ENCODE measurements at regions of chr7 and their contacts with region 1.

Region 1: DNA sequence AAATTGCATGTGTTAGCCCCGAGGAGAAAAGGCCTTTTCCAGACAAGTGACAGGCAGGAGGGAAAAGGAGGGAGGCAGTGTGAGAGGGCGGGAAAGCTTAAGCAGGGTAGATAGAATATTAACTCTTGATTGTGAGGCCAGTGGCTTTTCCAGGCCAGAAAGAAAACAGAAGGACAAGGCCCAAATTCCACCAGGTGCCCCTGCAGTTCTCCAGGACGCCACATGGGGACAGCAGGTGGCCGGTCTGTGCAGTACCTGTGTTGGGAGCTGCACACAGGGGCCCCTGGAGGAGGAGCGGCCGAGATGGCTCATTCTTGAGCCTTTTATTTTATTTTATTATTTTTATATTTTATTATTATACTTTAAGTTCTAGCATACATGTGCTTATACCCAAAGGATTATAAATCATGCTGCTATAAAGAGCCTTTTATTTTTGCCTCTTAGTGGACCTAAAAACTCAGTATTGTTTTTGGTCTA is 141.3 kb upstream of the KLF14 start:
- DNase-seq: peak in 8 of 9 donors; percentile 17 to 41 (median 32)
- ATAC-seq: peak; percentile 86
- H3K4me3 ChIP-seq: no peak overlapping the region
- H3K4me3 Mint-ChIP-seq: no peak overlapping the region
- H3K27ac ChIP-seq: no peak overlapping the region
- H3K27ac Mint-ChIP-seq: peak overlapping the region in 7 of 9 donors; percentile 3 to 78 (median 53)
- H3K4me1 ChIP-seq: peaks cover 4 to 6% of the 10 kb centered on the region in 2 donors
- H3K4me1 Mint-ChIP-seq: peaks cover 19 to 46% (median 40%) of the 10 kb centered on the region in 7 donors
- H3K27me3 ChIP-seq: no peaks in the 10 kb centered on the region
- H3K27me3 Mint-ChIP-seq: no peaks in the 10 kb centered on the region

Region 2: DNA sequence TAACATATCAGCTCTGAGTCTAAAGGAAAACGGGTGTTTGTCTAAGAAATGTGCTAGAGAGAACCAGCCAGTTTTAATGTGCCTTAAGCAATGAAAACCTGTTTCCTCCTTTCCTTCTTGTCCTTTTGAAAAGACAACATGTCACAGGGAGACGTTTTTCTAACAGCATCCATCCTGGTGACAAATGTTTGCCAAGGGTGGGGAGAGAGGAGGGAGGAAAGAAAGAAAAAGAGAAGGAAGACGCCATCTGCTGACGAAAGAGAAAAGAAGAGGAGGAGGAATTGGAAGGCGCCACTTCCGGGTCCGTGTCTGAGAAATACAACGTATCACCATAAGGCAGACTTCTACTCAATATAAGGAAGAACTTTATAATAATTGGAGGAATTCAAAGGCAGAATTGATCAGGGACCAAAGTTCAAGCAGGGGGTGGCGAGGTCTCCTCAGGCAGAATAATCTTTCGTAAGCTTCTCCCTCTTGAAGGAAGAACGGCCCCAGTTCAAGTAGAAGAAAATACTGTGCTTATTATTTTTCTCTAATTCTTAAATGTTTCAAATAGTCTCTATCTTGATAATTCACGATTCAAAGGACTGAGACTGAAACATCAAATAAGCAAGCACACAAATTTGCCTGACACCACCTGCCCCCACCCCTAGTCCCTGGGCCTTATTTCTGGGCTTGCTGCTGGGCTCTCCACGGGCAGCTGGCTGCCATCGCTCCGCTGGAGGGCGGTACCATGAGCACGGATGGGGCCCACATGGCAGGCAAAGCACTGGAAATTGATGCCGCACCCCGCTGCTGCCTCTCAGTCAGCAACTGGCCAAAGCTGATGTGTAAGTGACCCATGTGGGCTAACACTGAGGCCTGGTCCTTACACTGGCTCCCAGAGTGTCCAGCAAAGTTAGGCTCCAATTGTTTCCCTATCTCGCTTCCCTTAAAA is 132.4 kb after region 1 on chr7:
- CTCF ChIA-PET with region 1: no interaction called
- POLR2A ChIA-PET with region 1: no interaction called
- intact Hi-C with region 1: loop called in 1 of 2 experiments (anchors 5 kb)
- DNase-seq: peak in 7 of 9 donors; percentile 51 to 69 (median 63)
- ATAC-seq: peak; percentile 72
- H3K4me3 ChIP-seq: no peak overlapping the region
- H3K4me3 Mint-ChIP-seq: peak overlapping the region in 9 of 10 donors; percentile 52 to 87 (median 69)
- H3K27ac ChIP-seq: peak overlapping the region; percentile 67
- H3K27ac Mint-ChIP-seq: peak overlapping the region; percentile 83 to 97 (median 88)
- H3K4me1 ChIP-seq: peaks cover 60 to 64% of the 10 kb centered on the region in 2 donors
- H3K4me1 Mint-ChIP-seq: peaks cover 68 to 94% (median 87%) of the 10 kb centered on the region in 7 donors
- H3K27me3 ChIP-seq: no peaks in the 10 kb centered on the region
- H3K27me3 Mint-ChIP-seq: no peaks in the 10 kb centered on the region

Region 3: GRCh38 chr7:131040467-131040932 is 165.2 kb after region 1 on chr7:
- CTCF ChIA-PET with region 1: no interaction called
- POLR2A ChIA-PET with region 1: interaction called, 7 read pairs
- intact Hi-C with region 1: loop called in 1 of 2 experiments (anchors 1 kb)
- DNase-seq: peak in 7 of 9 donors; percentile 31 to 63 (median 56)
- ATAC-seq: peak; percentile 71
- H3K4me3 ChIP-seq: no peak overlapping the region
- H3K4me3 Mint-ChIP-seq: peak overlapping the region; percentile 16 to 84 (median 60)
- H3K27ac ChIP-seq: no peak overlapping the region
- H3K27ac Mint-ChIP-seq: peak overlapping the region; percentile 29 to 82 (median 54)
- H3K4me1 ChIP-seq: peaks cover 14 to 27% of the 10 kb centered on the region in 2 donors
- H3K4me1 Mint-ChIP-seq: peaks cover 44 to 78% (median 68%) of the 10 kb centered on the region in 7 donors
- H3K27me3 ChIP-seq: no peaks in the 10 kb centered on the region
- H3K27me3 Mint-ChIP-seq: no peaks in the 10 kb centered on the region

Region 4: DNA sequence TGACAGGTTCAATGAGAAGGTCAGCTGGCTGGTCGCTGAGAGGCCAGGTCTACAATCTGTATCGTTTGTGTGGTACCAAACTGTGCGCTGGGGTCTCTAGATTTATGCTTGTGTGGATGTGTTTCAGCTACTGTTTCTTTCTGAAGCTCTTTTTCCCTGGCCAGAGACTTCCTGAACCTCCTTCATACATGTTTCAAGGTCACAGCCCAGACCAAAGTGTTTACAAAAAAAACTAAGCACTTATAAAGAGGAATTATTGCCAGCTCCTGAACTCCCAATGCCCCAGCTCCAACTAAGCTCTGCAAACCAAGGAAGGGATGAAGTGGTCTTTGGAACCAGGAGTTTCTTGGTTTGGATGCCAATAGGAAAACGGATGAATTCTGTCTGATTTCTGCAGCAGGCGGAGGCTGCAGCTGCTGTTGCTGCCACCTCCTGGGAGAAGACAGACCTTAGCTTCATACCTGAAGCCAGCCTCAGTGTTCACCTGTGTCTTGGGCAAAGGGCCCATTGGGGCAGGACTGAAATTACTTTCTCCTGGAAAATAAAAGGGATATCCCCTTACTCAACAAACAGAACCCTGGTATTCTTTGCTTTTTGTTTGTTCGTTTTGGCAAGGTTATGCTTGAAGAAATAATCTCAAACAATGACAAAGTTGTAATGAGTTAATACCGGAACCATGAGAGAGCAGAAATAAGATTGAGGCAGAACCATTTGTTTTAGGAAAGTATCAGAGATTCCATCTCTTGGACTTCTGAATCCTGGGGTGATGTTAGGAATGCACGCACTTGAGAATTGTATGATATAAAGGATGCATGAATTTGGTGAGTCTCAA is 427.8 kb after region 1 on chr7:
- CTCF ChIA-PET with region 1: no interaction called
- POLR2A ChIA-PET with region 1: no interaction called
- intact Hi-C with region 1: loop called in 1 of 2 experiments (anchors 1 kb)
- DNase-seq: peak in 6 of 9 donors; percentile 16 to 34 (median 24)
- ATAC-seq: peak; percentile 45
- H3K4me3 ChIP-seq: no peak overlapping the region
- H3K4me3 Mint-ChIP-seq: no peak overlapping the region
- H3K27ac ChIP-seq: no peak overlapping the region
- H3K27ac Mint-ChIP-seq: peak overlapping the region in 1 of 9 donors; percentile 68
- H3K4me1 ChIP-seq: no peaks in the 10 kb centered on the region
- H3K4me1 Mint-ChIP-seq: no peaks in the 10 kb centered on the region
- H3K27me3 ChIP-seq: no peaks in the 10 kb centered on the region
- H3K27me3 Mint-ChIP-seq: peaks cover 0 to 4% (median 0%) of the 10 kb centered on the region in 5 donors

Region 5: DNA sequence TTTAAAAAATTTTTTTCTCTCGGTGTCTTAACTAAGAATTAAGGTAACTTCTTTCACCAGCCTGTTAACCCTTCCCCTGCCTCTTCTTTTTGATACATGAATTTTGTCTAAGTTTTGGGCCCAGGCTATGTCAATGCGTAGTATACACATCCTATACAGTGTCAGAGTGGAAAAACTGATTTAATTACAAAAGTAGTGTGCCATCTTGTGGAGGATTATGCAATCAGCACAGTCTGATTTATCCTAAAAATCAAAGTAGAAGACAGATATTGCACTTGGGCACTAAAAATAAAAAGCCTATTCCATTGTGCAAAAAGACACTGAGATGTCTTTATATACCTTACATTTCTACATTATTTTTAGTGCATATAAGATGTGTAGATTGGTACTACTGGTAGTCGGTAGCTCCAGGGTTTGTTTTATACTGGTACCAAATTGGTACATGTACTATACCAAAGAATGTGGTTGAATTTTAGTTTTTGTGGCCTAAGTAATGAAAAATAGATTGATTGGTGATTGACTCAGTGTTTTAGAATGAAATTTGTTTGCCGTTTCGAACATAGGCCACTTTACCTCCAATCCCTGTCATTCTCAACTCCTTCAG is 549.0 kb after region 1 on chr7:
- CTCF ChIA-PET with region 1: no interaction called
- POLR2A ChIA-PET with region 1: no interaction called
- intact Hi-C with region 1: loop called in 1 of 2 experiments (anchors 5 kb)
- DNase-seq: peak in 7 of 9 donors; percentile 18 to 50 (median 44)
- ATAC-seq: peak; percentile 90
- H3K4me3 ChIP-seq: no peak overlapping the region
- H3K4me3 Mint-ChIP-seq: no peak overlapping the region
- H3K27ac ChIP-seq: no peak overlapping the region
- H3K27ac Mint-ChIP-seq: peak overlapping the region in 2 of 9 donors; percentile 11
- H3K4me1 ChIP-seq: no peaks in the 10 kb centered on the region
- H3K4me1 Mint-ChIP-seq: peaks cover 0 to 20% (median 13%) of the 10 kb centered on the region in 7 donors
- H3K27me3 ChIP-seq: no peaks in the 10 kb centered on the region
- H3K27me3 Mint-ChIP-seq: no peaks in the 10 kb centered on the region

Region 6: DNA sequence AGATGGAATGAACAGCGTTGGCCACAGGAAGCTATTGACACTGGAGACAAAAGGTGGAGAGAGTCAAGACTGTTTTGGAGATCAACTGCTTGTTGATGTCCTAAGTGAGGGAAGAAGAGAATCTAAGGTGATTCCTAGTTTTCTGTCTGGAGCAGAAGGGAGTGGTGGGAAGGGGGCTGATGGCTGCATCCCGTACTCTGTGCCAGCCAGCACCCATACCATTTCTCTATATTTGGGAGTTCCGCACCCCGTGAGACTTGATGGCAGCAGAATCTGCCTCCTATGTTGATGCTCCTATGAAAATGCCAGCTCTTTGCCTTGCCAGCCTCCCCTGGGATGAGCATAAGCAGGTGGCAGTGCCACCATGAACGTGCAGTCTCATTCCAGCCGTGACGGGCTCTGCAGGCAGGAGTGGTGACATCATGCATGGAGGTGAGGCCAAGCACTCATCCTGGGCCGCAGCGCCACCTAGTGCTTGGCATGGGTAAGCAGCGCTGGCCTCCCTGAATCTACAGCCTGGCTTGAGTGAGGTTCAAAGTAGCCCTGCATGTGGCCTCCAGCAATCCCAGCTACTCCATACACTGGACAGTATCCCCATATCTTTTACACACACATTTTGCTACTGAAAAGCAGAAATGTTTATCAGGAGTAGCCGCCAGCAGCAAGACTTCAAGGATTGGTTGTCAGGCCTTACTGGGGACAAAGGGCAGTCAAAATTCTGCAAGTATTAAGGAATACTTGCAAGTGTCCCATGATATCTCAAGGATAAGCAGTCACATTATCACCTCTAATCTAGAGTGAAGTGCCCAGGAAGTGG is 638.1 kb after region 1 on chr7:
- CTCF ChIA-PET with region 1: no interaction called
- POLR2A ChIA-PET with region 1: no interaction called
- intact Hi-C with region 1: loop called in 1 of 2 experiments (anchors 1 kb)
- DNase-seq: peak; percentile 39 to 80 (median 65)
- ATAC-seq: peak; percentile 98
- H3K4me3 ChIP-seq: no peak overlapping the region
- H3K4me3 Mint-ChIP-seq: peak overlapping the region in 5 of 10 donors; percentile 33 to 65 (median 47)
- H3K27ac ChIP-seq: no peak overlapping the region
- H3K27ac Mint-ChIP-seq: peak overlapping the region in 3 of 9 donors; percentile 1 to 27 (median 21)
- H3K4me1 ChIP-seq: peaks cover 0 to 4% of the 10 kb centered on the region in 2 donors
- H3K4me1 Mint-ChIP-seq: peaks cover 11 to 22% (median 19%) of the 10 kb centered on the region in 7 donors
- H3K27me3 ChIP-seq: no peaks in the 10 kb centered on the region
- H3K27me3 Mint-ChIP-seq: peaks cover 0 to 13% (median 3%) of the 10 kb centered on the region in 5 donors

Measured in naive thymus-derived CD4-positive, alpha-beta T cell (primary cell).